Panc1 (cell line): ENCODE measurements at regions of chr10 and their contacts with region 1.

Region 1: GRCh38 chr10:74234569-74234968 is 83.5 kb downstream of the ADK start:
- DNase-seq: no peak
- ATAC-seq: no peak
- H3K4me3 ChIP-seq: no peak overlapping the region
- H3K27ac ChIP-seq: no peak overlapping the region
- H3K4me1 ChIP-seq: no peaks in the 10 kb centered on the region
- H3K27me3 ChIP-seq: no peaks in the 10 kb centered on the region
- CTCF ChIP-seq: no peak; the same call in 1 of the 2 replicates

Region 2: DNA sequence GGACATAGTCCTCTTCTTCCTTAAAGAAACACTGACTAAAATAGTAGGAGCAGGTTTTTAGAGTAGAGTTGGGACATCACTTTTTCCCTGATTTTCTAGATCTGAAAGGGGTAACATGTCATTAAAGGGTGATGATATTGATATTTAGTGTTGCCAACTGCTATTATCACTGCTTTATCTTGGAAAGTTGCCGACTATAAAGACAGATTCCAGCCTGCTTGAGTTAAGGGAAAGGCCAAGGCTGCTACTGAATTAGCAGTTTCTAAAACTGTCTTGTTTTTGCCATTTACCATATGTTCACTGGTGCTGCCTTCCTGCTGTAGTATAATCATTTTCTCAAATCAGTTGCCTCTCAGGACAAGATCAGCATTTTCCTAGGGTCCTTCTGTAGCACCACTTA is 113.7 kb before region 1 on chr10:
- CTCF ChIA-PET with region 1: no interaction called
- POLR2A ChIA-PET with region 1: no interaction called
- in situ Hi-C with region 1: no loop called
- intact Hi-C with region 1: loop called (anchors 5 kb)
- DNase-seq: no peak
- ATAC-seq: no peak
- H3K4me3 ChIP-seq: no peak overlapping the region
- H3K27ac ChIP-seq: peak overlapping the region; percentile 12; the same call in 1 of the 2 replicates
- H3K4me1 ChIP-seq: no peaks in the 10 kb centered on the region
- H3K27me3 ChIP-seq: no peaks in the 10 kb centered on the region
- CTCF ChIP-seq: no peak

Region 3: GRCh38 chr10:74255888-74256357 is 21.4 kb after region 1 on chr10:
- CTCF ChIA-PET with region 1: no interaction called
- POLR2A ChIA-PET with region 1: interaction called, 17 read pairs
- in situ Hi-C with region 1: no loop called
- intact Hi-C with region 1: no loop called
- DNase-seq: no peak
- ATAC-seq: no peak
- H3K4me3 ChIP-seq: no peak overlapping the region
- H3K27ac ChIP-seq: no peak overlapping the region
- H3K4me1 ChIP-seq: no peaks in the 10 kb centered on the region; the same call in 1 of the 2 replicates
- H3K27me3 ChIP-seq: no peaks in the 10 kb centered on the region
- CTCF ChIP-seq: no peak